MCF 10A (cell line): ENCODE measurements at regions of chr2 and their contacts with region 1.

Region 1: DNA sequence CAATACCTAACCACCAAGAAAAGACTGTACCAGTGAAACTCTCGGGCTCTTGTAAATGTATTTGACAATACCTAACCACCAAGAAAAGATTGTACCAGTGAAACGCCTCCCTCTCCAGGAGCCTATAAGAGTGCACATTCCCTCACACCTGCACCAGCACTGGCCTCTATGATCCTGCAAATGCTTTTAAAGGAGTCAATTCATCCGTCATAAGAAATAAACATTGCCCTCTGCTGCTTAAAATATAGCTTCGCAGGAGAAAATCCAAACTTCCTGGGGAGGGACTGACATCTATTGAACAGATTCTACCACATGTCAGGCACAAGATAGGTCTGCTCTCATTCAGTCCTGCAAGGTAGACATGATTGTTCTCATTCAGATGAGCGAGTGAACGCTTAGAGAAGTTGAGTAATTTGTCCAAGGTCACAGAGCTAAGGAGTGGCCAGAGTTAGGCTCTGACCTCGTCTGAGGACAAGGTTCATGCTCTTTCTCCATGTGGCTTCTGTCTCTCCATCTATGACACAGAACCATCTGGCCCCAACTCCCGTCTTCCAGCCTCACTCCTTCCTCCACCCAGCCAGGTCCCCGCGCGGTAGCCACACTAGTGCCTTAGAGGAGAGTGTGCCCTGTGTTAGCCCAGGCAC is 38.7 kb downstream of the MCFD2 start:
- DNase-seq: peak; percentile 84
- H3K4me3 Mint-ChIP-seq: no peak overlapping the region
- H3K27ac Mint-ChIP-seq: no peak overlapping the region
- H3K4me1 Mint-ChIP-seq: peaks cover 9% of the 10 kb centered on the region
- H3K27me3 Mint-ChIP-seq: no peaks in the 10 kb centered on the region
- CTCF ChIP-seq: peak; percentile 68

Region 2: GRCh38 chr2:46650556-46651001 is 226.3 kb before region 1 on chr2:
- CTCF ChIA-PET with region 1: interaction called, 24 read pairs
- POLR2A ChIA-PET with region 1: interaction called, 25 read pairs
- intact Hi-C with region 1: loop called (anchors 2 kb)
- DNase-seq: peak; percentile 84
- H3K4me3 Mint-ChIP-seq: no peak overlapping the region
- H3K27ac Mint-ChIP-seq: no peak overlapping the region
- H3K4me1 Mint-ChIP-seq: peaks cover 34% of the 10 kb centered on the region
- H3K27me3 Mint-ChIP-seq: no peaks in the 10 kb centered on the region
- CTCF ChIP-seq: peak; percentile 84

Region 3: GRCh38 chr2:46776687-46777327 is 100.1 kb before region 1 on chr2:
- CTCF ChIA-PET with region 1: interaction called, 3 read pairs
- POLR2A ChIA-PET with region 1: no interaction called
- intact Hi-C with region 1: loop called (anchors 2 kb)
- DNase-seq: peak; percentile 81
- H3K4me3 Mint-ChIP-seq: no peak overlapping the region
- H3K27ac Mint-ChIP-seq: no peak overlapping the region
- H3K4me1 Mint-ChIP-seq: peaks cover 14% of the 10 kb centered on the region
- H3K27me3 Mint-ChIP-seq: no peaks in the 10 kb centered on the region
- CTCF ChIP-seq: peak; percentile 55

Region 4: GRCh38 chr2:46847235-46848068 is 29.4 kb before region 1 on chr2:
- CTCF ChIA-PET with region 1: interaction called, 7 read pairs
- POLR2A ChIA-PET with region 1: interaction called, 31 read pairs
- intact Hi-C with region 1: no loop called
- DNase-seq: peak; percentile 98
- H3K4me3 Mint-ChIP-seq: peak overlapping the region; percentile 47
- H3K27ac Mint-ChIP-seq: peak overlapping the region; percentile 70
- H3K4me1 Mint-ChIP-seq: peaks cover 52% of the 10 kb centered on the region
- H3K27me3 Mint-ChIP-seq: no peaks in the 10 kb centered on the region
- CTCF ChIP-seq: no peak

Region 5: GRCh38 chr2:47165001-47165555 is 288.2 kb after region 1 on chr2:
- CTCF ChIA-PET with region 1: no interaction called
- POLR2A ChIA-PET with region 1: no interaction called
- intact Hi-C with region 1: no loop called
- DNase-seq: no peak
- H3K4me3 Mint-ChIP-seq: no peak overlapping the region
- H3K27ac Mint-ChIP-seq: peak overlapping the region; percentile 46
- H3K4me1 Mint-ChIP-seq: peaks cover 13% of the 10 kb centered on the region
- H3K27me3 Mint-ChIP-seq: no peaks in the 10 kb centered on the region
- CTCF ChIP-seq: no peak

Region 6: GRCh38 chr2:47225061-47225859 is 348.4 kb after region 1 on chr2:
- CTCF ChIA-PET with region 1: no interaction called
- POLR2A ChIA-PET with region 1: no interaction called
- intact Hi-C with region 1: no loop called
- DNase-seq: peak; percentile 86
- H3K4me3 Mint-ChIP-seq: no peak overlapping the region
- H3K27ac Mint-ChIP-seq: no peak overlapping the region
- H3K4me1 Mint-ChIP-seq: peaks cover 22% of the 10 kb centered on the region
- H3K27me3 Mint-ChIP-seq: no peaks in the 10 kb centered on the region
- CTCF ChIP-seq: no peak